Activated T-helper 1 cell treated with anti-CD3 and anti-CD28 coated beads, Interleukin-12 subunit alpha, Interleukin-12 subunit beta, Interleukin-2, Interleukin-4 antibody, amounts not matched to agents 30 ng/mL and 10 ng/mL and 1 ng/mL, durations not matched to agents 14 hours and 24 hours and 36 hours (primary cell): ENCODE measurements at regions of chr15 and their contacts with region 1.

Region 1: GRCh38 chr15:34318277-34319079 is 19.1 kb downstream of the SLC12A6 start:
- DNase-seq: no peak
- H3K4me3 Mint-ChIP-seq: peak overlapping the region; percentile 88
- H3K27ac Mint-ChIP-seq: peak overlapping the region; percentile 79
- H3K4me1 Mint-ChIP-seq: peaks cover 43% of the 10 kb centered on the region
- H3K27me3 Mint-ChIP-seq: no peaks in the 10 kb centered on the region

Region 2: GRCh38 chr15:34337557-34338306 is 19.3 kb after region 1 on chr15 and contains the start of gene SLC12A6:
- intact Hi-C with region 1: loop called (anchors 2 kb)
- DNase-seq: peak; percentile 90
- H3K4me3 Mint-ChIP-seq: peak within 1 kb of the TSS; percentile 97
- H3K27ac Mint-ChIP-seq: peak within 1 kb of the TSS; percentile 97
- H3K4me1 Mint-ChIP-seq: peaks cover 66% of the 10 kb centered on the region
- H3K27me3 Mint-ChIP-seq: no peaks in the 10 kb centered on the region
- total RNA-seq, gene SLC12A6: 33.2 and 36.4 TPM in 2 replicates

Region 3: DNA sequence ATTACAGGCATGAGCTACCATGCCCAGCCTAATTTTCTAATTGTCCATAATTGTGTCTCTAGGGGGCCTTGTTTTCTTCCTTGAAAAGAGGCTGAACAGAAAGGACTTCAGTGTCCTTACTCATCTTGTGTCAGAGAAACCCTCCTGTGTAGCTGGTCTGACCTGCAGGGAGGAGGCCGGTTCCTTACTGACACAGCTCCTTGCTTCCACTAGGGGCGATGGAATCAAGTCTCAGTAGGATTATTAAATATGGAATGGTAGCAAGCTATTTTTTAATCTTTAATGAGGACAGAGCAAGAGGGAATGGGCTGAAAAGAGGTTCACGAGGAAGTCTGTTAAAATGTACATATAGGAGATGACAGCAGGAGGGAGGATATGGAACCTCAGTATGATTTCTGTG is 39.9 kb after region 1 on chr15:
- intact Hi-C with region 1: no loop called
- DNase-seq: no peak
- H3K4me3 Mint-ChIP-seq: no peak overlapping the region
- H3K27ac Mint-ChIP-seq: no peak overlapping the region
- H3K4me1 Mint-ChIP-seq: peaks cover 12% of the 10 kb centered on the region
- H3K27me3 Mint-ChIP-seq: no peaks in the 10 kb centered on the region